ENCODE measurements at regions of chr12 and their contacts with region 1.

Region 1: DNA sequence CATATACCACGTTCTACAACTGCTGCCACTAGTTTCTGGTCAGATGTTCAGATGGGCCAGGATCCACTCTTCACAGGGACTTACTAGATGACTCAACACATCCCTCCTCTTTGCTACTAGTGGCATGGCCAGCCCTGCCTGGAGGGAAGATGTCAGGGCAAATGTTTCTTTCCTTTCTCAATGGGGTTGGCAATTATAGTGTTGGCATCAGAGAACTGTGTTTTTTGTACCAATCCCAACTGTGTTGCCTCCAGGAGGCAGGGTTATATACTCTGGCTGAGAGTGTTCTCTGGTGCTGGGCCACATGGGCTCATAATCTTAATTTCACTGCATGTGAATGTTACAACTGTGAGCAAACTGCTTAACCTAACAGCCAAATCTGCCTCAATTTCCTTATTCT is 69.9 kb upstream of the AVPR1A start:
- DNase-seq: no peak
- H3K4me3 ChIP-seq: no peak overlapping the region
- H3K27ac ChIP-seq: no peak overlapping the region
- H3K4me1 ChIP-seq: no peaks in the 10 kb centered on the region
- H3K27me3 ChIP-seq: no peaks in the 10 kb centered on the region
- CTCF ChIP-seq: no peak
- POLR2A ChIP-seq: no peak

Region 2: GRCh38 chr12:62014330-62014729 is 1206.6 kb before region 1 on chr12:
- intact Hi-C with region 1: loop called (anchors 10 kb)
- DNase-seq: no peak
- H3K4me3 ChIP-seq: no peak overlapping the region
- H3K27ac ChIP-seq: no peak overlapping the region
- H3K4me1 ChIP-seq: no peaks in the 10 kb centered on the region
- H3K27me3 ChIP-seq: no peaks in the 10 kb centered on the region
- CTCF ChIP-seq: no peak
- POLR2A ChIP-seq: no peak